HCT116 (cell line): ENCODE measurements at regions of chr6 and their contacts with region 1.

Region 1: DNA sequence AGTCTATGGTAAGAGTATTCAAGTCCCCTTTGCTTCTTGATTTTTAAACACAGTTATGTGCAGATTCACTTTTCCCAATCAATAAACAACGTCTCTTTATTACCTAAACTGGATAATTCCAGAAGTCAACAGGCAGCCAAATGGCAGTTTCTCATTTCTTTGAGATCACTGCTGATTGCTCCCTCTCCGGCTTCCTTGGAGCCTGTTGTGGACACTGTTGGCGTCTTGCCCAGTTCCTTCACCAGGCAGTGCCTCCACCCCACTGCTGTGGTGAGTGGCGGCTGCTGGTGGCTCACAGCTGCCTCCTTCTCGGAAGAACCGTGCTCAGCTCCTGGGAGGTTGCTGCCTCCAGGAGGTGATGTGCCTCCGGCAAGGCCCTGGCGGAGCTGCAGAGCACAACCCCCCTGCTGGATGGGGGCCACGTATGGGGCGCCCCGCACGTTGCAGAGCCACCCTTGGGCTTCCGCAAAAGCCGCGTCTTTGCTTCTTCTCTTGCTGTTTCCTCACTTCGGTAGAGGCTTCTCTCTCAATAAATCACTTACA is 105.1 kb upstream of the CNKSR3 start:
- DNase-seq: peak; percentile 80
- ATAC-seq: peak; percentile 97
- H3K4me3 ChIP-seq: peak overlapping the region; percentile 24 to 52
- H3K27ac ChIP-seq: peak overlapping the region; percentile 32
- H3K4me1 ChIP-seq: peaks cover 5 to 21% of the 10 kb centered on the region in 2 experiments; a peak in 3 of 4 replicates
- H3K27me3 ChIP-seq: no peaks in the 10 kb centered on the region
- CTCF ChIP-seq: peak; percentile 36 to 63 (median 47); a peak in 4 of 6 replicates
- POLR2A ChIP-seq: no peak
- RAD21 ChIP-seq: peak; percentile 80

Region 2: DNA sequence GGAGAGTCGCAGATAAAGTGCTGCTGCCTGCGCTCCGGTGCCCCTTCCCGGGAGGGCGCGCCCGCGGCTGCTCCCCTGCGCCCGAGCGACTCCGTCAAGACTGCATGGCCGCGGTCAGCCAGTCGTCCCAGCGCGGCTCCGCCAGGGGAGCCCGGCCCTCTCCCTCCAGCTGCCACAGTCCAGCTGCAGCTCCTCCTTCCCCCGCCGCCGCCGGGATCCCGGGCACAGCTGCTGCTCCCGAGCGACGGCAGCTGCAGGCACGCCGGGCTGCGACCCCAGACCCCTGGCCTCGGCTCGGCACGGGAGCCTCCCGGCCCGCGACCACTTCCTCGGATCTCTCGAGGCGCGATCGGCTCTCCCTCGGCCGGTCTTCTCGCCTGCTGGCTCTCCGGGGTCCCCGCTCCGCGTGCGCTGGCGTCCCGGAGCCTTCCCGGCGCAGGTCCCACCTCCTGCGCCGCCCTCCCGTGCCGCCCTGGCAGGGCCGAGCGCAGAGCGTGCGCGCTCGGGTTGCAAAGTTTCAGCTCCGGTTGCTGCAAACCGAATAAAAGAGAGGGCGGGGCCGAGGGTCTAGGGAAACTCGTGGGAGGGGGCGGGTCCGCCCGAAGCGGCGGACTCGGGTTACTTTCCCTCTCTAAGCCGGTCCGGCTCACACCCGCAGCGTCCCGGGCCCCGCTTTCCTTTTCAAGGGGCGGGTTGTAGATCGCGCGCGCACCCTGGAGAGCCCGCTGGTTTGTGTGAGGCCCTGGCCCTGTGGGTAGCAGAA is 105.2 kb before region 1 on chr6 and contains the start of gene CNKSR3:
- CTCF ChIA-PET with region 1: no interaction called
- POLR2A ChIA-PET with region 1: no interaction called
- RAD21 ChIA-PET with region 1: no interaction called
- intact Hi-C with region 1: loop called (anchors 5 kb)
- DNase-seq: peak; percentile 83
- ATAC-seq: peak; percentile 88
- H3K4me3 ChIP-seq: peak within 1 kb of the TSS; percentile 78 to 82
- H3K27ac ChIP-seq: peak within 1 kb of the TSS; percentile 90
- H3K4me1 ChIP-seq: peaks cover 13 to 24% of the 10 kb centered on the region in 2 experiments
- H3K27me3 ChIP-seq: no peaks in the 10 kb centered on the region
- CTCF ChIP-seq: no peak
- POLR2A ChIP-seq: peak; percentile 90
- RAD21 ChIP-seq: peak; percentile 3; the same call in 1 of the 2 replicates
- total RNA-seq, gene CNKSR3: 15.4 TPM

Region 3: DNA sequence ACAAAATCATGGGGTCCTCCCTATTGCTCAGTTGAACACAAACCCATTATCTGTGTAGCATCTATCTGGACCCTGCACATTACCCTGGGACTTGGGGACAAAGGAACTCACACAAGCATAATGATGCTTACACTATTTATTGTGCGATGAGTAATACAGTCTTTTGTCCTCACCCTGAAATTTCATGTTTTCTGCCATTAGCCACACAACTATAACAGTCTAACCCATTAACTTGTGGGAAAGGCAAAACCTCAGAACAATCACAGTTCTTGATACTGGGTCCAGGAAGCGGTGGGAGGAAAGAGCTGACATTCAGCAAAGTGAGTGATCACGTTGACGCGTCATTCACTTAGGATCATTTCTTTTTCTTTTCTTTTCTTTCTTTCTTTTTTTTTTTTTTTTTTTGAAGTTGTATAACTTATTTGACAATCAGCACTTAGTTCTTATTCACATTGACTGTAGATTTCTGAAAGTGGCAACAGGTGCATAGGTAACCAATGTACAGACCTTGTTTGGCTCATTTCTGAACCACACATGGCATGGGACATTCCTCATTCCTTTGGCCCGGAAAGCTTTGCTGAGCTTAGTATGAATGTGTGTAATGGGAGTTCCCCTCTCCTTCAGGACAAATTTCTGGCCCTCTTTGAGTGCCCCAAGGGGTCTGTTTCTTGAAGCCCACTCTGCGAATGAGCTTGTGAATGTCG is 10.2 kb before region 1 on chr6:
- CTCF ChIA-PET with region 1: no interaction called
- POLR2A ChIA-PET with region 1: no interaction called
- RAD21 ChIA-PET with region 1: no interaction called
- intact Hi-C with region 1: no loop called
- DNase-seq: no peak
- ATAC-seq: no peak
- H3K4me3 ChIP-seq: no peak overlapping the region
- H3K27ac ChIP-seq: no peak overlapping the region
- H3K4me1 ChIP-seq: no peaks in the 10 kb centered on the region
- H3K27me3 ChIP-seq: no peaks in the 10 kb centered on the region
- CTCF ChIP-seq: no peak
- POLR2A ChIP-seq: no peak
- RAD21 ChIP-seq: no peak